ENCODE measurements at regions of chr3 and their contacts with region 1.

Region 1: GRCh38 chr3:48609088-48610005 is at the start of gene UQCRC1:
- DNase-seq: peak; percentile 98
- H3K4me3 Mint-ChIP-seq: peak within 1 kb of the TSS; percentile 99
- H3K27ac Mint-ChIP-seq: peak within 1 kb of the TSS; percentile 99
- H3K4me1 Mint-ChIP-seq: peaks cover 22% of the 10 kb centered on the region
- H3K27me3 Mint-ChIP-seq: no peaks in the 10 kb centered on the region
- total RNA-seq, gene UQCRC1: 224 and 235 TPM in 2 replicates

Region 2: DNA sequence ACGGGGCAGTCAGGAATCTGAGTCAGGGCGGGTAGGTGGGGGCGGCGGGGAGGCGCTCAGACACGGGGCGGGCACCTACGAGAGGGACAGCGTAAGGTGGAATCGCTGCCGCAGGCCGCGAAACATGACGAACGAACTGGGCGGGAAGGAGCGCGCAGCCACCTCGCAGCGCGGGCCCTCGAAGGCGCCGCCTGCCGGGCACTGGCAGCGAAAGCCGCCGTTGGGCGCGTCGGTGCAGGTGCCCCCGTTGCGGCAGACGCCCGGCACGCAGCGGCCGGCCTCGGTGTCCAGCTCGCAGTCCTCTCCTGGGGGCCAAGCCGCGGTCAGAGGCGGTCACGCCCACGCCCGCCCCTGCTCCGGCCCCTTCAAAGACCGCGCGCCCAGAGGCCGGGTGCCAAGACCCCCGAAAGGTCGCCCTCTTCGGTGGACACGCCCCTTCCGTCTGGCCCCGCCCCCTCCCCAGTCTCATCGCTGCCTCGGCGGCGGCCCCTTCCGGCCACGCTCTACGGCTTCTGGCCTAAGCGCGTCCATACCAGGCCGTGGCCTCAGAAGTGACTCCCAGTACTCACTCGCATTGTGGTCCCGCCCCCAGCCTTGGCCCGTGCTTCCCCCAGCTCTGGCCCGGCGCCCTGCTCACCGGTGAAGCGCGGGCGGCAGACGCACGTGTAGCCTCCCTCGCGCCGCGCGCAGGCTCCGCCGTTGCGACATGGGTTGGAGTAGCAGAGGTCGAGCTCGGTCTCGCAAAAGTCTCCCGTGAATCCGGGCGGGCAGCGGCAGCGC is 46.9 kb after region 1 on chr3:
- intact Hi-C with region 1: loop called (anchors 1 kb)
- DNase-seq: peak; percentile 95
- H3K4me3 Mint-ChIP-seq: peak overlapping the region; percentile 85
- H3K27ac Mint-ChIP-seq: peak overlapping the region; percentile 92
- H3K4me1 Mint-ChIP-seq: peaks cover 22% of the 10 kb centered on the region
- H3K27me3 Mint-ChIP-seq: peaks cover 2% of the 10 kb centered on the region

Region 3: DNA sequence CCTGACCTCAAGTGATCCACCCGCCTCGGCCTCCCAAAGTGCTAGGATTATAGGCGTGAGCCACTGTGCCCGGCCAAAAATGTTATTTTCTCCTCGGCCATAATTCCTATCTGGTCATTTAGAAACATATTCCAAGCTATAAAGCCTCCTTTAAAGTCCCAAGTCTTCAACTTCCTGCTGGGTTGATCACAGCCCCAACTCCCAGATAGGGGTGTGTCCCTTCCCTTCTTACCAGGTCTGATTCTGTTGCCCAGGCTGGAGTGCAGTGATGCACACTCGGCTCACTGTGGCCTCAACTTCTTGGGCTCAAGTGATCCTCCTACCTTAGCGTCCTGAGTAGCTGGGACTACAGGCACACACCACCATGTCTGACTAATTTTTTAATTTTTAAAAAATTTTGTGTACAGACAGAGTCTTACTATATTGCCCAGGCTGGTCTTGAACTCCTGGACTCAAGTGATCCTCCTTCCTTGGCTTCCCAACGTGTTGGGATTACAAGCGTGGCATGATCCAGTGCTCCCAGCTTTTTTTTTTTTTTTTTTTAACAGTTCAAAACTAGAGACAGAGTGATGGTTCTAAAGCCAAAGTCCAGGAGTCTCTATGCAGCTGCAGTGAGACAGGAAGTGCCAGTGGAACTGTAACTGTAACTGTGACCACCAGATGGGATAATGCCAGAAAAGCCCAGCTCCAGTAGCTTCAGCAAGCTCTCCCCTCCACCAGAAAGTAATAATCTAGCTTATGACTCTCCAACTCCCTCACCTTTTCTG is 246.5 kb after region 1 on chr3:
- intact Hi-C with region 1: no loop called
- DNase-seq: no peak
- H3K4me3 Mint-ChIP-seq: no peak overlapping the region
- H3K27ac Mint-ChIP-seq: no peak overlapping the region
- H3K4me1 Mint-ChIP-seq: peaks cover 3% of the 10 kb centered on the region
- H3K27me3 Mint-ChIP-seq: no peaks in the 10 kb centered on the region

Measured in activated CD4-positive, alpha-beta T cell treated with anti-CD3 and anti-CD28 coated beads, Interleukin-2, amount 10 ng/mL, durations not matched to agents 24 days and 14 days (primary cell).